Head of caudate nucleus (tissue), 42 donors: ENCODE measurements at regions of chr9 and their contacts with region 1.

Region 1: DNA sequence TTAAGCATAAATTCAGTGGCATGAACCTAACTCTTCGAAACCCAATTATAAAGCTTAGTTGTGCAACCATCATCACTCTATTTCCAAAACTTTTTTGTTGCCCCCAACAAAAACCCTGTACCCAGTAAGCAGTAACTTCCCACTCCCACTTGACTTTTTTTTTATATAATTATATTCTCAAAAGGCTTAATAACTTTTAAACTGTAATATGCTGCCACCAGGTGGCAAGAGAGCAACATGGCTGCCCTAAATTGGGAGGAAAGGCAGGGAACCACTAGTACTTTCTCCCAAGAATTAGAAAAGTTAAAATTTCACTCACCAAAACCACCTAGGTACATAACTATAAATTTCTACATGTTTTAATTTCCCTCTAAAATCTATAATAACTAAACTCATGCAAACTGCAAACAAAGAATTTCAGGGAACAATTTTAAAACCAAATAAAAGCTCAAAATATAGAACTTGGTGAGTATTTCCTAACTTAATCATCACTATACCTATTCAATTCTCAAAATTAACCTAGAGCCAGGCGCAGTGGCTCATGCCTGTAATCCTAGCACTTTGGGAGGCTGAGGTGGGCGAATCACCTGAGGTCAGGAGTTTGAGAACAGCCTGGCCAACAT is 50.2 kb upstream of the RNF38 start:
- DNase-seq: peak in 34 of 42 donors; percentile 16 to 81 (median 52)

Region 2: DNA sequence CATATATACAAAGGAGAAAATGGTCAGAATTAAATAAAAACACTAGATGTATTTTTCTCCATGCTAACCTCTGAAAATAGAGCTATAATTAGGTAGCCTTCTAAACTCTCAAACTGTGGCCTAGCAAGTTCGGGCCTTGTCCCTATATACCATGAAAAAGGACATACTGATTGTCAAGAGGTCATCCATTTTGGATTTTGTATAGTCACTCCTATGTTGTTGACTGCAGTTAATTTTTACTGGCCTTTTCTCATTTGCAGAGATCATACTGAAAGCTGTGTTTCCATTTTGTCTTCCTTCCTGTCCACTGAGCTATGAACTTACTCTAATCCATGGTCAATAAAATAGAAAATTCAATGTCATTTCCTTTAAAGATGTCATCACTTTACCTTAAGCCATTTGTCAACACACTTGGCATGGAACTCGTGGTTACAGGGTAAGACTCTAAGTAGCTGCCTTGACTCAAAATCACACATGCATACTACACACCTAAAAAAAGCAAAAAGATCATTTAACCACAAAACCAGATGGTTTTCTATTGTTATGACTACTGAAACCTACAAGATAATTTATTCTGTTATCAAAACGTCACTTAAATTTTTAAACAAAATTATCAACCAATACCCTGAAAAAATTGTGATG is 108.2 kb before region 1 on chr9:
- intact Hi-C with region 1: loop called (anchors 5 kb)
- DNase-seq: no peak

Region 3: GRCh38 chr9:36407122-36407723 is 43.0 kb before region 1 on chr9:
- intact Hi-C with region 1: loop called (anchors 5 kb)
- DNase-seq: peak; percentile 5 to 87 (median 63)

Region 4: GRCh38 chr9:36551129-36551528 is 100.9 kb after region 1 on chr9:
- intact Hi-C with region 1: loop called (anchors 10 kb)
- DNase-seq: no peak